ENCODE measurements at regions of chr10 and their contacts with region 1.

Region 1: GRCh38 chr10:105154736-105155135 is 513.6 kb downstream of the SORCS3 start:
- DNase-seq: no peak

Region 2: GRCh38 chr10:105170521-105170920 is 15.8 kb after region 1 on chr10:
- intact Hi-C with region 1: loop called in 1 of 2 experiments (anchors 1 kb)
- DNase-seq: no peak

Measured in posterior vena cava (tissue), 2 donors.